ENCODE measurements at regions of chr2 and their contacts with region 1.

Region 1: DNA sequence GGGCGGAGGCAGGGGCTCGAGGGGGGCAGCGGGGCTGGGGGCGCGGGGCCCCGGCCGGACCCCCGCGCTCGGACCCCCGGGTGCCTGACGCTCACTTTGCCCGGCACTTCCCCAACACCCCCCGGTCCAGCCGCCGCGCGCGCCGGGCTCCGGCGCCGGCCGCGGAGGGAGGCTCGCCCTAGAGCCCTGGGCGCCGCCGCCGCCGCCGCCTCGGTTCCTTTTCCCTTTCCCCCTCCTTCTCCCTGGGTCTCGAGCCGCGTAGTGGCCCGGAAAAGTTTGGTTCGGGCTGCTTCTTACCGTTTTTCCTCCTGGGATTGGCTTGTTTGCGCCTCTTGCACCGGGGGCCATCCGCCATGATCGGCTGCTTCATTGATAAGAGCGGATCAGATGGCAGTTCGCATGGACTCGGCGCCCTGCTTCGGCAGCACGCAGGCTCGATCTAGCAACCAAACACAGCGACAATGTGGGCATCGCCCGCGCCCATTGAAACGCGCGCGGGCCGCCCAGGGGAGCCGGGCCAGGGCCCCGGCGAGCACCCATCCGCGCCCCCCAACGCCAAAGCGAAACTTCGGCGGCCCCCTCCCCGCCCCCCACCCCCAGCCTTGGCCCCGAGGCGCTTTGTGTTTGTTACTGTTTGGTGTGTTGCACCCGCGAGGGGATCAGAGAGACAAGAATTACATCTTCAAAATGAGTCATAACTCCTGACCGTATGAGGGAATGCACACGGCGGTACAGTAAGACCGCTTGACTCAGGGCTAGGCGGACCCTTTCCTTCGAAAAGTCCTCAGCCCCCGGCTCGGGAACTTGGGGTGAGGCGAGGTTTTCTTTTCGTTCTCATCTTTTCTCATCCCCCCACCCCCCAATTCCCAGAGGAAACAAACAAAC is 2.7 kb downstream of the ZEB2 start:
- DNase-seq: peak; percentile 98
- ATAC-seq: peak; percentile 60
- H3K4me3 ChIP-seq: peak overlapping the region; percentile 99
- H3K27ac ChIP-seq: peak overlapping the region; percentile 99
- H3K4me1 ChIP-seq: peaks cover 5% of the 10 kb centered on the region; the same call in 1 of the 2 replicates
- H3K27me3 ChIP-seq: no peaks in the 10 kb centered on the region
- CTCF ChIP-seq: no peak
- POLR2A ChIP-seq: no peak; the same call in none of the 2 replicates
- RAD21 ChIP-seq: peak; percentile 41

Region 2: DNA sequence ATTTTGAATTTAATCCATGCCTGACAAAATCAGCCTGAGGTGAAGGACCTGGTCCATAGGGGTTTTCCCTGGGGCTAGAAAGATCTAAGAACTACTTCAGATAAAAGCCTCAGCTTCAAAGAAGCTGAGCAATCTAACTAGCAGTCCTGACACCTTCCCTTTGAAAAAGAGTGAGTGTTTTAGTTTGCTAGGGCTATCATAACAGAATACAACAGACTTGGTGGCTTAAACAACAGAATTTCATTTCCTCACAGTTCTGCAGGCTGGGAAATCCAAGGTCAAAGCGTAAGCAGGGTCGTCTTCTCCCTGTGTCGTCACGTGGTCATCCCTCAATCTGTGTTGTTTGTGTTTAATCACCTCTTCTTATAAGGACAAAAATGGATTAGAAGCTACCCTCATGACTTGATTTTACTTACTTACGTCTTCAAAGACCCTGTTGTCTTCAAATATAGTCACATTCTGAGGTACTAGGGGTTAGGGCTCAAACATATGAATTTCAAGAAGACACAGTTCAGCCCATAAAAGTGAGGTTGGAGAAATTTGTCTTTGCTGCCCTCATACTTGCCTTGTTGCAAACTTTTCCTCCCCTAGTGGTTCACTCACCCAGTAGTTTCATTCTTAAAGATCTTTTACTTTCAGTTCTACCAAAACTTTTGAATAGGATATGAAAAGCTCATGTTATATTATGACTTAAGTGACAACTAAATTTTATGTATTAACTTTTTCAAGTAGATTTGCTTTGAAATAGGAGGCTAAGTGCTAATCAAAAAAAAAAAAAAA is 714.2 kb before region 1 on chr2:
- CTCF ChIA-PET with region 1: no interaction called
- POLR2A ChIA-PET with region 1: no interaction called
- dilution Hi-C with region 1: no loop called
- in situ Hi-C with region 1: no loop called
- intact Hi-C with region 1: loop called (anchors 10 kb)
- DNase-seq: peak; percentile 28
- ATAC-seq: peak; percentile 13; the same call in 1 of the 2 replicates
- H3K4me3 ChIP-seq: no peak overlapping the region
- H3K27ac ChIP-seq: peak overlapping the region; percentile 85
- H3K4me1 ChIP-seq: peaks cover 18% of the 10 kb centered on the region
- H3K27me3 ChIP-seq: no peaks in the 10 kb centered on the region
- CTCF ChIP-seq: no peak
- POLR2A ChIP-seq: no peak
- RAD21 ChIP-seq: no peak

Region 3: GRCh38 chr2:144374163-144374661 is 143.0 kb before region 1 on chr2:
- CTCF ChIA-PET with region 1: no interaction called
- POLR2A ChIA-PET with region 1: no interaction called
- dilution Hi-C with region 1: no loop called
- in situ Hi-C with region 1: no loop called
- intact Hi-C with region 1: no loop called
- DNase-seq: peak; percentile 53
- ATAC-seq: 0 out of 2 replicates have a peak, but pooled peaks have one; percentile 47
- H3K4me3 ChIP-seq: no peak overlapping the region
- H3K27ac ChIP-seq: no peak overlapping the region
- H3K4me1 ChIP-seq: peaks cover 12% of the 10 kb centered on the region
- H3K27me3 ChIP-seq: no peaks in the 10 kb centered on the region
- CTCF ChIP-seq: no peak
- POLR2A ChIP-seq: no peak
- RAD21 ChIP-seq: no peak

Region 4: GRCh38 chr2:144471305-144472045 is 45.7 kb before region 1 on chr2:
- CTCF ChIA-PET with region 1: no interaction called
- POLR2A ChIA-PET with region 1: no interaction called
- dilution Hi-C with region 1: no loop called
- in situ Hi-C with region 1: no loop called
- intact Hi-C with region 1: no loop called
- DNase-seq: no peak
- ATAC-seq: no peak
- H3K4me3 ChIP-seq: no peak overlapping the region
- H3K27ac ChIP-seq: no peak overlapping the region
- H3K4me1 ChIP-seq: peaks cover 4% of the 10 kb centered on the region
- H3K27me3 ChIP-seq: no peaks in the 10 kb centered on the region
- CTCF ChIP-seq: no peak
- POLR2A ChIP-seq: no peak
- RAD21 ChIP-seq: no peak

Region 5: DNA sequence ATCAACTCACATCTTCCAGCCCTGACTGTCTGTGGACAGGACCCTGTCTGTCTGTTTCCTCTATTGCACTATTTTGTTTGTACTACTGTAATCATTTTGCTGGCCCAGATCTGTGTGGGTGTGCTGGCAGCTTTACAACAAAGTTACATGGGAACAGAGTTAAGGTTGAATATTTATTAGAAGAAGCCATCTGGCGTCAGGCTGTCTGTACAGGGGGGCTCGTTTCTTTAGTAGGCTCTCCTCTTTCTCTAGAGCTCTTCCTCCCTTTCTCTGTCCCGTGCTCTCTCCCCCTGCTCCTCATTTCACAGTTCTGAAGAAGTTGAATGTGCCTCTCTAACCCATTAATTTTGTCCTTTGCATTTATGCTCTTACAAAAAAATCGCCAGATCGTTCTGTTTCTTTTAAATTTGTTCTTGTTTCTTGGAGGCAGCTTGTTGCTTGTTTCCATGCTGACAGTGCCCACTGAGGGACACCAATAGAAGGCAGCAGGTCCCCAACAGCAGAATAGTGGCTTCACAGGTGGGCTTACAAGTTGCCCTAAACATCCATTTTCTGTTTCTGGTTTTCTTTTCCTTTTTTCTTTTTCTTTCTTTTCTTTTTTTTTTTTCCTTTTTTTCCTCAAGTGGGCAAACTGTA is 317.9 kb after region 1 on chr2:
- CTCF ChIA-PET with region 1: no interaction called
- POLR2A ChIA-PET with region 1: no interaction called
- dilution Hi-C with region 1: no loop called
- in situ Hi-C with region 1: no loop called
- intact Hi-C with region 1: loop called (anchors 5 kb)
- DNase-seq: peak; percentile 88
- ATAC-seq: peak; percentile 79
- H3K4me3 ChIP-seq: peak overlapping the region; percentile 6; the same call in 1 of the 2 replicates
- H3K27ac ChIP-seq: peak overlapping the region; percentile 61
- H3K4me1 ChIP-seq: peaks cover 12% of the 10 kb centered on the region
- H3K27me3 ChIP-seq: no peaks in the 10 kb centered on the region
- CTCF ChIP-seq: no peak
- POLR2A ChIP-seq: no peak
- RAD21 ChIP-seq: peak; percentile 1; the same call in 1 of the 2 replicates

Region 6: DNA sequence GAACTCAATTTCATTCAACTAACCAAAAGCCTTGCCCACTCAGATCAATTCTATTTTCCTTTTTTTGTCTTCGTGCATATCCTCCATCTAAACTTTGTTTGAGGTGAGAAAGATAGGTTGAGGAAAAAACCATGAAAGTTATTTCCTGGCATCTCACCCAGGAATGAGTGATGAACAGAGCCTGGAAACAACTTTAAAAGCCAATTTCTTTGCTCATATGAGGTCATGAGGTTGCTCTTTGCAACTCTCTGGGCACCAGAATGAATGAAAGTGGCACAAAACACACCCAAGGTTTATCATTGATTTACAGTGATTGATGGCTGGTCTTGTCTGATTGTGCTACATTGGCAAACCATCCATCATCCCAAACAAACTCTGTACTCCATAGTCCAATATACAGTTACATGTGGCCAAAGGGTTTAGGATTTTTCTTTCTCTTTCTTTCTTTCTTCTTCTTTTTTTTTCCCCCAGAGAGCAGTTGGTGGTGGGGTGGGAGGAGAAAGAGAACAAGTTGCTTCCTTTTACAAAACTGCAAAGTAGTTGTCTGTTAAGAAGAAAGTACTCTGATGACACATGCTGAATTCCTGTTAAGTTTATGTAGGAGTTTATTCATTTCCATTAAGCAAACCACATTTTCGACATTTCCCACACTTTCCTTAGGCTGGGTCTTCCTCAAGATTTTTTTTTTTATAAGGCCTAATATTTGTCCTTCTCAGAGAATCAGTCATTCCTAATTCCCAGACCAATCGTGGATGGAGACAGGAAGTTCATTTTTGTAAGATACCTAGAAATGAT is 578.6 kb after region 1 on chr2:
- CTCF ChIA-PET with region 1: no interaction called
- POLR2A ChIA-PET with region 1: no interaction called
- dilution Hi-C with region 1: no loop called
- in situ Hi-C with region 1: no loop called
- intact Hi-C with region 1: loop called (anchors 10 kb)
- DNase-seq: peak; percentile 93
- ATAC-seq: peak; percentile 74
- H3K4me3 ChIP-seq: no peak overlapping the region
- H3K27ac ChIP-seq: no peak overlapping the region
- H3K4me1 ChIP-seq: peaks cover 3% of the 10 kb centered on the region; the same call in 1 of the 2 replicates
- H3K27me3 ChIP-seq: no peaks in the 10 kb centered on the region
- CTCF ChIP-seq: no peak
- POLR2A ChIP-seq: no peak
- RAD21 ChIP-seq: 0 out of 2 replicates have a peak, but pooled peaks have one; percentile 4

Region 7: GRCh38 chr2:145483854-145484253 is 966.6 kb after region 1 on chr2:
- CTCF ChIA-PET with region 1: no interaction called
- POLR2A ChIA-PET with region 1: no interaction called
- dilution Hi-C with region 1: no loop called
- in situ Hi-C with region 1: no loop called
- intact Hi-C with region 1: loop called (anchors 2 kb)
- DNase-seq: no peak
- ATAC-seq: no peak
- H3K4me3 ChIP-seq: no peak overlapping the region
- H3K27ac ChIP-seq: no peak overlapping the region
- H3K4me1 ChIP-seq: no peaks in the 10 kb centered on the region
- H3K27me3 ChIP-seq: no peaks in the 10 kb centered on the region
- CTCF ChIP-seq: no peak
- POLR2A ChIP-seq: no peak
- RAD21 ChIP-seq: no peak

Region 8: GRCh38 chr2:145752091-145752806 is 1235.0 kb after region 1 on chr2:
- CTCF ChIA-PET with region 1: no interaction called
- POLR2A ChIA-PET with region 1: no interaction called
- dilution Hi-C with region 1: no loop called
- in situ Hi-C with region 1: loop called (anchors 5 kb)
- intact Hi-C with region 1: loop called (anchors 2 kb)
- DNase-seq: peak; percentile 89
- ATAC-seq: peak; percentile 83
- H3K4me3 ChIP-seq: no peak overlapping the region
- H3K27ac ChIP-seq: peak overlapping the region; percentile 43; the same call in 1 of the 2 replicates
- H3K4me1 ChIP-seq: peaks cover 12% of the 10 kb centered on the region
- H3K27me3 ChIP-seq: no peaks in the 10 kb centered on the region
- CTCF ChIP-seq: peak; percentile 82
- POLR2A ChIP-seq: no peak
- RAD21 ChIP-seq: peak; percentile 90